Cardiac septum (tissue), 1 donor: ENCODE measurements at regions of chr16 and their contacts with region 1.

Region 1: GRCh38 chr16:46673320-46674013 is 15.5 kb downstream of the VPS35 start:
- DNase-seq: no peak

Region 2: GRCh38 chr16:46801428-46802049 is 128.1 kb after region 1 on chr16:
- intact Hi-C with region 1: loop called (anchors 5 kb)
- DNase-seq: no peak

Region 3: DNA sequence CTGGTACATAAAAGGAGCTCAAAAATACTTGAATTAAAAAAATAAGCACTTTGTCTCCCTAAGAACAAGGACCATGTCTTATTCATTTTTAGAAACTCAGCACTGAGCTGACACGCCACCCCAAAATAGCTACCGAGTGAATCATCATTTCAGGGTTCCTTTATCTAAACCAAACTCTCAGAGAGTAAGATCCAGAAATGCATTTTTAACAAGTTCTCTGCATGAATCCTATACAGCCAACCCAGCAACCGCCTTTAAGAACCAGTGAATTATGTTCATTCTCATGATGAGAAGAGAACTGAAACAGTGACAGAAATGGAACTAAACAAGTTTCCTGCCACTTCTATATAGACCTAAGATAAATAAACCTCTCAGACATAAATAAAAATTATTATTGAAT is 148.8 kb after region 1 on chr16:
- intact Hi-C with region 1: no loop called
- DNase-seq: no peak